IMR-90 (cell line): ENCODE measurements at regions of chr7 and their contacts with region 1.

Region 1: DNA sequence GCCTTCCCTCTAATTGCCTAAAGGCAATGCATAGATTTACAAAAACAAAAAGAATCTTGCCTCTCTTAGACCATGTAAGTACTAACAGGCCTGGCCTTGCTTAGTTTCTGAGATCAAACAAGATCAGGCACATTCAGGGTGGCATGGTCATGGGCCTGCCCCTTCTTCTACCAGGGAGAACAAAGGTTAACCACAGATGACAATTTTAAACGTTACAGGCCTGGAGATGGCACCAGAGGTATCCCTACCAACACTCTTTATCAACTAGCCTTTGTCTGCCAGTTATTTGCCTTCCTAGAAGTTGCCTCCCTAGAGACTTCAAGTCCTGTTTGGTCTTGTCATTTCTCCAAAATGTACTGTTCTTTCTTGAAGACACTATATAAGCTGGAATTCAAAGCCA is 252.6 kb downstream of the DOCK4 start:
- DNase-seq: no peak
- ATAC-seq: no peak
- H3K4me3 ChIP-seq: no peak overlapping the region
- H3K27ac ChIP-seq: no peak overlapping the region
- H3K4me1 ChIP-seq: no peaks in the 10 kb centered on the region
- H3K27me3 ChIP-seq: no peaks in the 10 kb centered on the region
- CTCF ChIP-seq: no peak
- POLR2A ChIP-seq: no peak
- RAD21 ChIP-seq: no peak

Region 2: GRCh38 chr7:113199841-113200240 is 1246.2 kb after region 1 on chr7:
- CTCF ChIA-PET with region 1: no interaction called
- POLR2A ChIA-PET with region 1: no interaction called
- dilution Hi-C with region 1: no loop called
- in situ Hi-C with region 1: no loop called
- intact Hi-C with region 1: loop called (anchors 10 kb)
- DNase-seq: peak; percentile 82
- ATAC-seq: no peak
- H3K4me3 ChIP-seq: no peak overlapping the region
- H3K27ac ChIP-seq: no peak overlapping the region
- H3K4me1 ChIP-seq: peaks cover 11% of the 10 kb centered on the region
- H3K27me3 ChIP-seq: no peaks in the 10 kb centered on the region
- CTCF ChIP-seq: no peak
- POLR2A ChIP-seq: no peak
- RAD21 ChIP-seq: no peak